Heart right ventricle (tissue), 16 donors: ENCODE measurements at regions of chr4 and their contacts with region 1.

Region 1: GRCh38 chr4:82469791-82470345 is 39.5 kb downstream of the ENOPH1 start:
- DNase-seq: no peak
- ATAC-seq: peak in 7 of 8 donors; percentile 39 to 71 (median 63)
- H3K4me3 ChIP-seq: no peak overlapping the region
- H3K27ac ChIP-seq: peak overlapping the region in 1 of 10 donors; percentile 14
- H3K4me1 ChIP-seq: no peaks in the 10 kb centered on the region
- H3K27me3 ChIP-seq: no peaks in the 10 kb centered on the region
- CTCF ChIP-seq: peak in 1 of 9 donors; percentile 32

Region 2: DNA sequence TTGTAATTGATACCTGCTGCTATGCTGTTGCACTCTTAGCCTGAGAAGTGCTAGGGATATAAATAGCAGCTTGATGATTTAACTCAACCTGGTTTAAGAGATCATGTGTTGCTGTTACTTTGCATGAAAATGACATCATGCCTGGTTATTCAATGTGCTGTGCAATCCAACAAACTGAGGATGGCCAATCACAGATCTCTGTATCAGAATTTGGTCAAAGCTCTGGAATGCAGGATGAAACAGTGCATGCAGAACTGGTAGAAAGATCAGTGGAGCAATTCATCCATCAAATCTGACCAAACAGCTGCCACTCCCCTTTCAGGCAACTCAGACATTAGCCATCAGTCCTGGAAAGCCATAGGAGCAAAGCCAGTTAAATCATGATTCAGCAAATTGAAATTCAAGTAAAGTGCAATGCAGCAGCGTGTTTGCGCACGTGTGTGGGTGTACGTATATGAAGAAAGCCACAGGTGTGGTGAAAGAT is 837.9 kb before region 1 on chr4:
- intact Hi-C with region 1: no loop called
- DNase-seq: no peak
- ATAC-seq: peak in 6 of 8 donors; percentile 62 to 80 (median 68)
- H3K4me3 ChIP-seq: no peak overlapping the region
- H3K27ac ChIP-seq: no peak overlapping the region
- H3K4me1 ChIP-seq: peaks cover 0 to 23% (median 8%) of the 10 kb centered on the region in 9 donors
- H3K27me3 ChIP-seq: no peaks in the 10 kb centered on the region
- CTCF ChIP-seq: no peak

Region 3: GRCh38 chr4:82643994-82644733 is 174.3 kb after region 1 on chr4:
- intact Hi-C with region 1: no loop called
- DNase-seq: no peak
- ATAC-seq: no peak
- H3K4me3 ChIP-seq: no peak overlapping the region
- H3K27ac ChIP-seq: no peak overlapping the region
- H3K4me1 ChIP-seq: peaks cover 0 to 17% (median 0%) of the 10 kb centered on the region in 9 donors
- H3K27me3 ChIP-seq: no peaks in the 10 kb centered on the region
- CTCF ChIP-seq: no peak

Region 4: DNA sequence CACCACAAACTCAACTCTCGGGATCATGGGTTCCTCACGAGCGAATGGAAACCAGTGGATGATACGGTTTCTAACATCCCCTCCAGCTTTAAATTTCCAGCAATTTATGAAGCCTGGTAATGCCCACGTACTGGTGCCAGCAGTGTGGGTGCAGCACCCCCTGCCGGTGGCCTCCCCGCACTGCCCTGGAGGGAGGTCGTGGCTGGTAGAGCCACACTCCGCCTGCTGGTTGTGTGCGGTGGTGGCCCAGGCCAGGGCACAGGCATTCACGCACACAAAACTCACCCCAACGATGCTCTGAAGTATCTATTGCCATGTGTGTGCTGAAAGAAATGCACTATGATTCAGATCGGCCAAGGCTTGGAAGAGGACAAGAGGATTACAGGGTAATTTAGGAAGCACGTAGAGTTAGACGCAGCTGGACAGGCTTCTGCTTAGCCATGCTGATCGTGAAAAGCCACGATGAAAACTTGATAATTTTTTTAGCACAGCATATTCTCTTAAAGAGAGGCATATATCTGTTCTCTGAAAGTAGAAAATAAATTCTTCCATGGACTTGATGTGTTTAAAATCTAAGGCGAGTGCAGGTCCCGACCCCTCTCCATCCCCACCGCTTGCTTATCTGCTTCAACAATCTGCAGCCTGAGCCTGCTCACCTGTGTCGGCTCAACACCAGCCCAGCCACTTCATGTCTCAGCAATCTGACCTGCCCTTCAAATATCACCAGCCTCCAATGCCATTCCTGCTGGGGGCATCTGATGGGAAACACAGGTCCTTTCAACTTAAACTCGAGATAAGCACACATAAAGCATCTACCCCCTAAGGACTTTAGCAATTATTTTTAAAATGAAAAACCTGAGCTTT is 269.7 kb after region 1 on chr4:
- intact Hi-C with region 1: loop called in 1 of 10 experiments (anchors 5 kb)
- DNase-seq: peak; percentile 54 to 75
- ATAC-seq: peak; percentile 77 to 95 (median 94)
- H3K4me3 ChIP-seq: no peak overlapping the region
- H3K27ac ChIP-seq: no peak overlapping the region
- H3K4me1 ChIP-seq: no peaks in the 10 kb centered on the region
- H3K27me3 ChIP-seq: peaks cover 0 to 4% (median 0%) of the 10 kb centered on the region in 7 donors
- CTCF ChIP-seq: peak; percentile 81 to 99 (median 92)